Esophagus squamous epithelium (tissue), 5 donors: ENCODE measurements at regions of chr2 and their contacts with region 1.

Region 1: DNA sequence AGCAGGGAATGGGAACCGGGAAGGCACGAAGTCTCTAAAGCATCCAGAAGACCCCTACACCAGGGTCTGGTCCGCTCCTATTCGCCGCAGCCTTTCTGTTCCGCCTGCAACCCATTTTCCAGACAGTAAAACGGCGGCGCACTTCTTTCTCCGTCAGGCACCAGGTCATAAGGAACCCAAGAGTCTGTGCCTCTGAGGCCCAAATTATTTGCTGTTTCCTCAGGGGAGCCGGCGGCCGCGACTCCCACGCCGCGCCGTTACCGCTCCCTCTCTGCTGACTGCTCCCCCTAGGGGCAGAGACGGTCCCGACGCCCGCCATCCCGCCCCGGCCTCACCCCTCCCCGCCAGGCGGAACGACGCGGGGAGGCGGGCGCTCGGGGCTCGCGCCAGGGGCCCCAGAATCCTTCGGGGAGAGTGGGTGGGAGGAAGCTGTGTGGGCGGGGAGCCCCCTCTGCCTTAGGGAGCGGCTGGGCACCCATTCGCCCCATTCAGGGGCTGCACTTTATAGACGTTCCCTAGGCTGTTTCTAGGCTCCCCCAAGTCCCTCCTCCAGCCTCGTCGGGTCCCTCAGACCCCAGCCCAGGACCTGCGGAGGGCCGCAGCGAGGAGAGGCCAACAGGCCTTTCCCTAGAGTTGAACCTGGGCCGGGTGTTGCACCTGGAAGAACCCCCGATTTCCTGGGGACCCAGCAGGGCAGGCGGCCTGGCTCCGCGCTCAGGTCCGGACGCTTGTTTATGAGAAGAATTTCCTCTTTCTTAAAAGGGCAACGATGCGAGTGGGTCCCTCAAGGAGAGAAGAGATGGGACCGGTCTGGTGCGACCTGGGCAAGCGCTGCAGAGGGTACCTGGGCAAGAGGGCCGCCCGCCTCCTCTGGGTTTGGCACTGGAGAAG is 3.6 kb upstream of the CTDSP1 start:
- DNase-seq: peak; percentile 75
- H3K4me3 ChIP-seq: peak overlapping the region; percentile 93 to 99 (median 97)
- H3K27ac ChIP-seq: peak overlapping the region; percentile 99 to 100 (median 100)
- H3K4me1 ChIP-seq: peaks cover 13 to 55% (median 17%) of the 10 kb centered on the region in 3 donors
- H3K27me3 ChIP-seq: no peaks in the 10 kb centered on the region
- CTCF ChIP-seq: peak; percentile 86 to 98 (median 96)
- POLR2A ChIP-seq: peak in 3 of 4 donors; percentile 24 to 48 (median 44)

Region 2: DNA sequence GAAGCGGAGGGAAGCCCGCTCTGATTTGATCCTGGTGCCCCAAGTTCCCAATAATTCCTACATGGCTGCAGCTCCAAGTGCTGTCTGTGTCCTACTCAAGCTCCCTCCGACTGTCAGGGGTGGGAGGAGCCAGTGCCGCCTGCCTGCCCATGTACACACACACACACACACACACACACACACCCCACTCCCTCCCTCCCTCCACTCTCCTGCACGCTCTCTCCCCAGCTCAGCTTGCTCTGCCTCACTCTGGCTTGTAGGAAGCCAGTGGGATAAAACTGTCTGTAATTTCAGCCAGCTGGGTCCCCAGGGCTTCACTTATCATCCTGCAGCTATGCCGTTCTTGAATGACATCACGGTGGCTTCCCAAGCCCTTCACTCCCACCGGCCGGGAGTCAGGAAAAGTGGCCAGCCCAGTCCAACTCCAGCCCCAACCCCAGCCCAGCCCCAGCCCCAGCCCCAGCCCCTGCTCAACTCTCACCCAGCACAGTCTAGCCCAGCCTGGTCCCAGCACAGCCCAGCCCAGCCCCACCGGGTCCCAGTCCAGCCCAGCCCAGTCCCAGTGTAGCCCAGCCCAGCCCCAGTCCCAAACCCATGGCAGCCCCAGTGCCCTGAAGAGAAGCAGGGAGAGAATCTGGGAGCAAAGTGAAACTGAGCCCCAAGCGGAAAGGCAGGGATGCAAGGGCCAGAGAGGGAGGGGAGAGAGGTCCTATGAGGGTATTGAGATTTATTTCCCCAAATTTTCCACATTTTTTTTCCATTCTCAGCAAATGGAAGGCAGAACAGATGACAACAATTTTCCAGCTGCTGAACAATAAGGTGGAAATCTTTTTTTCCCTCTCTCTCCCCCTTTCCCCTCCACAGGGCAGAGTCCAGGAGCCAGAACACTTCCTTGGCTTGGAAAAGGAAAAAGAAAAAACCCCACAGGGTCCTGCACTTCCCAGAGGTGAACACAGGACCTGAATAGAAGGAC is 537.2 kb before region 1 on chr2:
- intact Hi-C with region 1: no loop called
- DNase-seq: no peak
- H3K4me3 ChIP-seq: peak overlapping the region in 2 of 4 donors; percentile 18 to 40
- H3K27ac ChIP-seq: peak overlapping the region; percentile 37 to 87 (median 78)
- H3K4me1 ChIP-seq: peaks cover 4 to 93% (median 23%) of the 10 kb centered on the region in 3 donors
- H3K27me3 ChIP-seq: no peaks in the 10 kb centered on the region
- CTCF ChIP-seq: no peak
- POLR2A ChIP-seq: no peak

Region 3: GRCh38 chr2:218269899-218270720 is 125.9 kb before region 1 on chr2 and contains the starts of genes AAMP and PNKD:
- intact Hi-C with region 1: loop called (anchors 5 kb)
- DNase-seq: peak; percentile 99
- H3K4me3 ChIP-seq: peak within 1 kb of the TSS; percentile 71 to 92 (median 74)
- H3K27ac ChIP-seq: peak within 1 kb of the TSS; percentile 84 to 93 (median 88)
- H3K4me1 ChIP-seq: peaks cover 29 to 78% (median 38%) of the 10 kb centered on the region in 3 donors
- H3K27me3 ChIP-seq: no peaks in the 10 kb centered on the region
- CTCF ChIP-seq: peak in 1 of 6 experiments; percentile 46
- POLR2A ChIP-seq: peak in 3 of 4 donors; percentile 39 to 78 (median 60)
- total RNA-seq, gene AAMP: 97.9 to 136 (median 118) TPM
- total RNA-seq, gene PNKD: 19.7 to 34.3 (median 28.0) TPM

Region 4: DNA sequence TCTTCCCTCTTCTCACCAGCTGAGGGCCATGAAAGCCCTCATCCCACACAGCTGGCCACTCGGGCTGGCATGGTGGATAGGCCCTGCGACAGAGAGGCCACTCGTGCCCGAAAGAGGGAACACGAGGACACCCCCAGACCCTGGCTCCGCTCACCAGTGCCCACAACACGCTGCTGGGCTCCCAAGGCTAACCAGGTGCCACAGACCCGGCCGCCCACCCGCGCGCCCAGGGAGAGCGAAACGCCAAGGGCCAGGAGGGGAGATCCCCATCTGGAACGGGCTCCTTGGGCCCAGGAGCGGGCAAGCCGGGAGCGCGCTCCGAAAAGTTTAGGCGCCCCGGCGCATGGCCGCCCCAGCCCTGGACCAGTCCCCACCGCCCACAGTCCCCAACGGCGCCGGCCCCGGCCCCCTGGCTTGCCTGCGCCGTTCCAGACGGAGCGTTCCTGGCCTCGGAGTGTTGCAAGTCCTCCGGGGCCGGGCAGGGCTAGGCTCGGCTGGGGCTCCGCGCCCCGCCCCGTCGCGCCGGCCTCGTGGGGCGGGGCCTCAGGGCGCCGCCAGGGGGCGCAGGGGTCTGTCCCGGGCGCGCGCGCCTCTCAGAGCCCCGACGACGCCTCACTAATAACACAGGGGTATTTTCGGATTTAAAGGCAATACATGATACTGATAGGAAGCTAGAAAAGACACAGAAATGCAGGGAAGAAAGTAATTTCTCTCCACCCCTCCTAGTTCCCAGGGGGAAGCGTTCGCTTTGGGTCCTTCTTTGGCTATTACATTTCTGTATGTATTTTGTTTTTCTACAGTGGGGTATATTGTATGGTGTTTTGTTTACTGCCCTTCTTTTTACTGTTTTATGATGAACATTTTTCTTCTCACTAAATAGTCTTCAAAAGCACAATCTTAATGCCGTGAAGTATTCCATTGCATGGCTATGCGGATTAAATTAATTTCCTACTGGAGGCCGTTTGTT is 103.7 kb before region 1 on chr2 and contains the start of gene TMBIM1:
- intact Hi-C with region 1: loop called (anchors 5 kb)
- DNase-seq: no peak
- H3K4me3 ChIP-seq: peak within 1 kb of the TSS; percentile 65 to 93 (median 79)
- H3K27ac ChIP-seq: peak within 1 kb of the TSS; percentile 94 to 99 (median 98)
- H3K4me1 ChIP-seq: peaks cover 52 to 93% (median 81%) of the 10 kb centered on the region in 3 donors
- H3K27me3 ChIP-seq: no peaks in the 10 kb centered on the region
- CTCF ChIP-seq: peak; percentile 57 to 99 (median 97)
- POLR2A ChIP-seq: peak in 3 of 4 donors; percentile 79 to 96 (median 92)
- total RNA-seq, gene TMBIM1: 238 to 342 (median 275) TPM